ENCODE measurements at regions of chr2 and their contacts with region 1.

Region 1: DNA sequence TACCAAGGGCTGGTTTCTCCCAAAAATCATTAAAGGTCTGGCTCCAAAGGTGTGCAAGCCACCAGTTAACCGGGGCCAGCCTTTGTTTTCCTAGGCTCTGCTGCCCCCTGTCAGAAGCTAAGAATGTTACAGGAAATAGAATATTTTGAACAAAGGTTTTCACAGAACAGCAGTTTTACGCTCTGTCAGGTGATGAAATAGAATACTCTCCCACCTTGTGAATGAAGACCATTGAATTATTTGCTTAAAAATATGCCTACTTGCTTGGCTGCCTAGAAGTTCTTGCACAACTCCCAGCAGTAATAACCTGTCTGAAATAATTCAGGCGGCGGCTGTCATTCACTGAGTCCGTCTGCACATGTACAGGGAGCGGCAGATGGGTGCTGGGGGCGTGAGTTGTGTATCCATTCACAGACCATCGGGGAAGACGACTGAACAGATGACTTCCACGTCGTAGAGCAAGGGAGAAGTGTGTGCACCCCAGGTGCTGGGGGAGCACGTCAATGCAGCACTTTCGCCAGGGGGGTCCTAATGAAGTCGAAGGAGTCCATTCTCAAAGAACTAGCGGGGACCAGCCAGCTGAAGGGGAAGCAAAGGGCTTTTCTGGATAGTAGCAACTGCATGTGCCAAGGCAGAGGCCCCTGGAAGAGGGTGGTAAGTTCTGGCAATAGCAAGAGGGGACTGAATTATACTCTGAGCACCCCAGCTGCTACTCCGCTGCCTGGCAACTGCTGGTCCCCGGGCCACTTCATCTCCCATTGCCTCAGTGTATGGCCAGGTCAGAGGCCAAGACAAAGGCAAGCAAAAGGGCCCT is 56.1 kb downstream of the SF3B1 start:
- DNase-seq: peak; percentile 36
- H3K4me3 ChIP-seq: no peak overlapping the region
- H3K27ac ChIP-seq: no peak overlapping the region
- H3K4me1 ChIP-seq: no peaks in the 10 kb centered on the region
- H3K27me3 ChIP-seq: no peaks in the 10 kb centered on the region
- CTCF ChIP-seq: peak in 3 of 4 experiments; percentile 63 to 79 (median 76)
- POLR2A ChIP-seq: no peak

Region 2: DNA sequence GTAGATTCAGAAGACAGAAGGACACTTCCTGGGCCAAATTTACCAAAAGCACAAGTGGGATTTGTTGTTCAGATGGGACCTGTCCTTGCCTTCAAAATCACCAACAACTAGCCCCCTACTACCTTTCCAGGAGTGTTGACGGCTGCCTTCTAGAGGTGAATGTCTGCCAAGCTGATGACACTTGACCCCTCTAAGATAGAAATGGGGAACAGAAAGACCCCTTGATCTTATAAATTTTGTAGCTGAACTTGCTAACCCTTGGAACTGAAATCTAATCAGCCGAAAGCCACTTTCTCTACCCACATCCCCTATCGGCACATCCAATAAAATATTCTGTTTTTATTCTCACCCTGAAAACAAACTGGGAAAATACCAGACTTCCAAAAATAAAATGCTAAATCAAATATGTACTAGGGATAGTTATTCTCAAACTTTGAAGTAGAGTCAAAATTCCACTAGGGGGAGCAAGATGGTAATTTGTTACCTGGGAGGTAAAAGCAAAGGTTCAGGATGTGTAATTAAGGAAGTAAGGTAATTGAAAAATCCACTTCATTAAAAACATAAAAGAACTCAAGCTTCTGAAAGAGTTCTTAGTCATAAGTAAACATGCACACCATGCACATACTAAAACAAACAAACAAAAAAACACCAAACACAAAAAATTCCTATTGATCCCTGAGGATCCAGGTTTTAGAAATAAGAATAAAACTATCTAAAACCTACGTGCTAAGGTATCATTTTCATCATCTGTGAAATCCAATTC is 187.3 kb before region 1 on chr2:
- intact Hi-C with region 1: loop called (anchors 10 kb)
- DNase-seq: no peak
- H3K4me3 ChIP-seq: no peak overlapping the region
- H3K27ac ChIP-seq: no peak overlapping the region
- H3K4me1 ChIP-seq: no peaks in the 10 kb centered on the region
- H3K27me3 ChIP-seq: no peaks in the 10 kb centered on the region
- CTCF ChIP-seq: peak; percentile 46 to 81 (median 73)
- POLR2A ChIP-seq: no peak